ENCODE measurements at regions of chr2 and their contacts with region 1.

Region 1: GRCh38 chr2:99559075-99559662 is 69.4 kb upstream of the REV1 start:
- DNase-seq: peak; percentile 58
- ATAC-seq: peak; percentile 99
- H3K4me3 ChIP-seq: no peak overlapping the region
- H3K27ac ChIP-seq: no peak overlapping the region
- H3K4me1 ChIP-seq: no peaks in the 10 kb centered on the region
- H3K27me3 ChIP-seq: no peaks in the 10 kb centered on the region
- CTCF ChIP-seq: peak; percentile 96
- EP300 ChIP-seq: no peak
- POLR2A ChIP-seq: no peak
- RAD21 ChIP-seq: peak; percentile 97

Region 2: DNA sequence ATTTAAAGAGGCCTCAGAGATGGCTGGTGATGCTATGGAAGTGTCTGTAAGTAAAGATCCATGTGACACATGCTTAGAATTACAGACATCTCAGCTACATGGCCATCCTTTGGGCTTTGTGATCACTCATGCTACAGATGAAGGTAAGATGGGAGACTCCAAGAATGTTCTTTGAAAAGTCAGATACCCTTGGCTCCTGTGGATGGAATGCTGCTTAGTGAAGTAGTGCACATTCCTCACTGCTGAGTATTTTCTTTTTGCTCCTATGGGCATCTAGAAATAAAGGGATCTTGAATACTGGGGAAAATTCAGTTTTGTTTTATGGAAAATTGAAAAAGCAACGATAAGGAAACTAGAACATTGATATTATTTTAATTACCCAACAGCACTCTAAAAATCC is 14.1 kb before region 1 on chr2:
- CTCF ChIA-PET with region 1: no interaction called
- POLR2A ChIA-PET with region 1: no interaction called
- in situ Hi-C with region 1: no loop called
- intact Hi-C with region 1: no loop called
- DNase-seq: no peak
- ATAC-seq: no peak
- H3K4me3 ChIP-seq: no peak overlapping the region
- H3K27ac ChIP-seq: no peak overlapping the region
- H3K4me1 ChIP-seq: no peaks in the 10 kb centered on the region
- H3K27me3 ChIP-seq: peaks cover 1 to 5% of the 10 kb centered on the region in 2 experiments; a peak in 1 of 5 replicates
- CTCF ChIP-seq: no peak
- EP300 ChIP-seq: no peak
- POLR2A ChIP-seq: no peak
- RAD21 ChIP-seq: no peak

Region 3: DNA sequence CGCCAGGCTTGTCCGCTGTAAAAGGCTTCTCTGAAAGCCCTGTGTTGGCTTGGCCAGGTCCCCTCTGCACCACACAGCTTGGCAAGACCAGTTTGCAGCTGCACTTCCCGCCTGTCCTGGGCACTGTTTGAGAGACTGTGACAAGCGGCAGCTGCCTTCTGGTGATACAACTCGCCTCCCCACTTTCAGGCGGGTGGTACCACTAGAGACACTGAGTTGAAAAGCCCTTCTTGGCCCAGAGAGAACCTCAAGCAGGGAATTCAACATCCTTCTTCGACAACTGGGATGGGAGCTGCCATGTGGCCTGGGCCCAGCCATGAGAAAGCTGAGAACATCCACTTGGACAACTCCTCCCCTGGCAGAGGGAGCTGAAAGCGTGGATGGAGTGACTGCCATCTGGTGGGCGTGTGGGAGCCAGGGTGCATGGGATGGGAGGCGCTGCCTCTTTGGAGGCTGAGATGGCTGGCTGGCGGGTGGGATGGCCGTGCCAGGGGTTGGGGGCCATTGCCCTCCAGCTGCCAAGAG is 56.1 kb after region 1 on chr2:
- CTCF ChIA-PET with region 1: interaction called, 5 read pairs
- POLR2A ChIA-PET with region 1: no interaction called
- in situ Hi-C with region 1: loop called (anchors 5 kb)
- intact Hi-C with region 1: loop called (anchors 1 kb)
- DNase-seq: peak; percentile 33
- ATAC-seq: peak; percentile 94
- H3K4me3 ChIP-seq: no peak overlapping the region
- H3K27ac ChIP-seq: no peak overlapping the region
- H3K4me1 ChIP-seq: no peaks in the 10 kb centered on the region
- H3K27me3 ChIP-seq: no peaks in the 10 kb centered on the region; a peak in 1 of 5 replicates
- CTCF ChIP-seq: peak; percentile 68
- EP300 ChIP-seq: no peak
- POLR2A ChIP-seq: no peak
- RAD21 ChIP-seq: no peak

Region 4: DNA sequence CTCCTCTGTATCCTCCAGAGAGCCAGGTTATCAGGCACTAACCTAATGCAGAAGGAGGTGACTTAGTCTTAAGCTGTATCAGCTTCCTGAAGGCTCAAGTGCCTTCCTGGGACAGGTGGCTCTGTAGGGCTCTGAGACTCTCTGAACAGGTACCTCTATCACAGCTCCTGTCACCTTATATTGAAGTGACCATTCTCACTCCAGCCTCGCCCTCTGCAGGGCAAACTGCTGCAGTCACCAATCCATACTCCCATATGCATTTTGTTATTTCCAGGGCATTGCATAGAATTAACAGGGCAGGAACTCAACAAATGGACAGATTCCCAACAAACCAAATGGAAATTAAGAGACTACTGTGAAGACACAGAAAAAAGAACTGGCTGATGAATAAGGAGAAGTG is 133.6 kb after region 1 on chr2:
- CTCF ChIA-PET with region 1: interaction called, 3 read pairs
- POLR2A ChIA-PET with region 1: no interaction called
- in situ Hi-C with region 1: no loop called
- intact Hi-C with region 1: loop called (anchors 1 kb)
- DNase-seq: no peak
- ATAC-seq: peak; percentile 76
- H3K4me3 ChIP-seq: no peak overlapping the region
- H3K27ac ChIP-seq: no peak overlapping the region
- H3K4me1 ChIP-seq: no peaks in the 10 kb centered on the region
- H3K27me3 ChIP-seq: no peaks in the 10 kb centered on the region
- CTCF ChIP-seq: 0 out of 2 replicates have a peak, but pooled peaks have one; percentile 17
- EP300 ChIP-seq: no peak
- POLR2A ChIP-seq: no peak
- RAD21 ChIP-seq: no peak

Region 5: GRCh38 chr2:99818842-99819241 is 259.7 kb after region 1 on chr2:
- CTCF ChIA-PET with region 1: no interaction called
- POLR2A ChIA-PET with region 1: no interaction called
- in situ Hi-C with region 1: loop called (anchors 10 kb)
- intact Hi-C with region 1: loop called (anchors 5 kb)
- DNase-seq: peak; percentile 10
- ATAC-seq: no peak
- H3K4me3 ChIP-seq: no peak overlapping the region
- H3K27ac ChIP-seq: no peak overlapping the region
- H3K4me1 ChIP-seq: no peaks in the 10 kb centered on the region
- H3K27me3 ChIP-seq: no peaks in the 10 kb centered on the region; a peak in 1 of 5 replicates
- CTCF ChIP-seq: 0 out of 2 replicates have a peak, but pooled peaks have one; percentile 13
- EP300 ChIP-seq: no peak
- POLR2A ChIP-seq: no peak
- RAD21 ChIP-seq: no peak

Region 6: GRCh38 chr2:100242891-100243619 is 683.9 kb after region 1 on chr2:
- CTCF ChIA-PET with region 1: interaction called, 51 read pairs
- POLR2A ChIA-PET with region 1: no interaction called
- in situ Hi-C with region 1: loop called (anchors 5 kb)
- intact Hi-C with region 1: loop called (anchors 1 kb)
- DNase-seq: peak; percentile 45
- ATAC-seq: peak; percentile 93
- H3K4me3 ChIP-seq: no peak overlapping the region
- H3K27ac ChIP-seq: no peak overlapping the region
- H3K4me1 ChIP-seq: no peaks in the 10 kb centered on the region
- H3K27me3 ChIP-seq: peaks cover 0 to 16% of the 10 kb centered on the region in 2 experiments; a peak in 3 of 5 replicates
- CTCF ChIP-seq: peak; percentile 97
- EP300 ChIP-seq: no peak
- POLR2A ChIP-seq: no peak
- RAD21 ChIP-seq: peak; percentile 94

Region 7: DNA sequence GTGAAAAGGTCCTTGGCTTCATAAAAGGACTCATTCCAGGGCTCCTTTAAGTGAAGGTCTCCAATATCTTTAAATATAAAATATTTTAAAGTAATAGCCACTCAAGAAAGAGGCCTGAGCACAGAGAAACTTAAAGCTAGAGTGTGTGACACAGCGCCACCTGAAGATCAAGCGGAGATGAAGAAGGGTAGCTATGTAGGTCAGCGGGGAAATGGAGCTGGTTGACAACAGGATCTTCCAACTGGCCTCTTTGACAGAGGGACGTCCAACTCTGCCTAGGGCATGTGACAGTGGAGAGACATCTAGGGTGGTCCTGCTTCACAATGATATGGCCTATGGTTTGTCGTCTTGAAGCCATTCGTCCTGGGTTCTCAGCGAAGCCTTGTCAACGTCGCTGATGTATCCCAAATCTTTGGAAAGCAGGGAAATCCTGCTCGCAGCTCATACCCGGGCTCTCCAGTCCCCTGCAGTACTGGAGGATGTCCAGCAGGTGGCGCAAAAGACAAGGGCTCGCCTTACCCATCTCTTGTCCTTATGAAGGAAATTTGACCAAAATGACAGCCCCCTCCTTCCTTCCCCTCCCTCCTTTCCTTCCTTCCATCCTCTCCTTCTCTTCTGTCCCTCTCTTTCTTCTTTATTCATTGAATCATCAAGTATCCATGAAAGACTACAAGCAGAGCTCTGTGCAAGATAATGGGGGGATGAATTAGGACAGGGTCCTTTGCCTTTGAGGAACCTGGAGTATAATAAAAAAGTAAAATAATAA is 703.6 kb after region 1 on chr2:
- CTCF ChIA-PET with region 1: interaction called, 14 read pairs
- POLR2A ChIA-PET with region 1: no interaction called
- in situ Hi-C with region 1: no loop called
- intact Hi-C with region 1: loop called (anchors 1 kb)
- DNase-seq: peak; percentile 41
- ATAC-seq: peak; percentile 70
- H3K4me3 ChIP-seq: no peak overlapping the region
- H3K27ac ChIP-seq: no peak overlapping the region
- H3K4me1 ChIP-seq: no peaks in the 10 kb centered on the region
- H3K27me3 ChIP-seq: peaks cover 0 to 4% of the 10 kb centered on the region in 2 experiments; a peak in 2 of 5 replicates
- CTCF ChIP-seq: peak; percentile 91
- EP300 ChIP-seq: no peak
- POLR2A ChIP-seq: no peak
- RAD21 ChIP-seq: peak; percentile 80

Region 8: GRCh38 chr2:100381240-100381639 is 822.1 kb after region 1 on chr2:
- CTCF ChIA-PET with region 1: no interaction called
- POLR2A ChIA-PET with region 1: no interaction called
- in situ Hi-C with region 1: loop called (anchors 25 kb)
- intact Hi-C with region 1: no loop called
- DNase-seq: peak; percentile 67
- ATAC-seq: peak; percentile 86
- H3K4me3 ChIP-seq: no peak overlapping the region
- H3K27ac ChIP-seq: no peak overlapping the region
- H3K4me1 ChIP-seq: no peaks in the 10 kb centered on the region
- H3K27me3 ChIP-seq: peaks cover 0 to 4% of the 10 kb centered on the region in 2 experiments; a peak in 2 of 5 replicates
- CTCF ChIP-seq: peak; percentile 88
- EP300 ChIP-seq: no peak
- POLR2A ChIP-seq: no peak
- RAD21 ChIP-seq: peak; percentile 62

Measured in HepG2 (cell line).